ENCODE measurements at regions of chr18 and their contacts with region 1.

Region 1: DNA sequence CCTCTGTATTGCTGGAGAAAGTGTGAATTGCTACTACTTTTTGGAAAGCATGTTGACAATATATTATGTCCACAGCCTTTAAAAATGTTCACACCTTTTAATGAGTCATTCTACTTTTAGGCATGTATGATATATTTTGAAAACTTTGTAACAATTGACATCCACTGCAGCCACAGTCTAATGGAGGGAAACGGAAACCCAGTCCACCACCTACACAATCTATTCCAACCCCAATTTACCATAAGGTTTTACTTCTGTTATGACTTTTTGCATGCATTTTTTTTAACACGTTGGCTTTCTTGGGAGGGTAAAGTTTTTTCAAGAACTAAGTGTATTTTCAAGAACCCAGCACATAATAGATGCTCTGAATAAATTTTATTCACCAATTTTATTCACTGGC is 38.5 kb upstream of the ATP8B1 start:
- DNase-seq: peak; percentile 3
- H3K4me3 Mint-ChIP-seq: peak overlapping the region; percentile 24
- H3K27ac Mint-ChIP-seq: peak overlapping the region; percentile 55
- H3K4me1 Mint-ChIP-seq: peaks cover 30% of the 10 kb centered on the region
- H3K27me3 Mint-ChIP-seq: peaks cover 31% of the 10 kb centered on the region

Region 2: DNA sequence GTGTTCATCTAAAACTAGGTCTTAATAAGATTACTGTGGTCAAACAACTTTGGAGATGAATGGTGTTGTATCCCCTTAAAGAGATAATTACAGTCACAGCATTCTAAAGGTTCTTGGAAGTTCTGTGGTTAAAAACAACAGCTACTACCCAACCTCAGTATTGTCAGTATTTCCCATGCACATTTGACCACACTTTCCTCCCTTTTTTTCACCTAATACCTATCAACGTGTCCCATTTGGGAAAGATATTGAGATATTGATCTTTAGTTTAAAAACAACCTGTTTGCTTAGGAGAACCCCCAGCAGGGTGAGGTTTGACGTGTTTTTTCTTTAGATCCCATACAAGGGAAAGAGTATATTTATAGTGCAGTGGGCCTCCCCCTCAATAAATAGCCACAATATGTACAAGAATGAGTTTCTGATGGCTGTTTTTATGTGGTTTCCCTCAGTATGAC is 1124.8 kb before region 1 on chr18:
- intact Hi-C with region 1: loop called (anchors 1 kb)
- DNase-seq: no peak
- H3K4me3 Mint-ChIP-seq: no peak overlapping the region
- H3K27ac Mint-ChIP-seq: peak overlapping the region; percentile 66
- H3K4me1 Mint-ChIP-seq: peaks cover 35% of the 10 kb centered on the region
- H3K27me3 Mint-ChIP-seq: no peaks in the 10 kb centered on the region

Region 3: GRCh38 chr18:56727399-56727798 is 1114.2 kb before region 1 on chr18:
- intact Hi-C with region 1: no loop called
- DNase-seq: no peak
- H3K4me3 Mint-ChIP-seq: peak overlapping the region; percentile 4
- H3K27ac Mint-ChIP-seq: peak overlapping the region; percentile 35
- H3K4me1 Mint-ChIP-seq: peaks cover 12% of the 10 kb centered on the region
- H3K27me3 Mint-ChIP-seq: no peaks in the 10 kb centered on the region

Region 4: DNA sequence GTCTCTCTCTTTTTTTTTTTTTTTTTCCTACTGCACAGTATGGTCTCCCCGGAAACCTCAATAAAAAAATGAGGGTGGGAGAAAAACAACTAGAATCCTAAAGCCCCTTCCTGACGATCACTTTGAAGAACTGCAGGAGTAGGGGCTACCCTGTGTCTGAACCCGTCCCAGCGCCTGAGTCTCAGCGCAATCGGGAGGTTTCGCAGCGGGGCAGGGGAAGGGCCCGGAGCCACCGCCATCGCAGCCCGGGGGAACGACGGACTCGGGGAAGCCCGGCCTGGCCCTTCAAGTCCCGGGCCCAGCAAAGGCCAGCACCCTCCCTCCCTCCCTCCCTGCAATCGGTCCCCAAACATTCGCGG is 220.3 kb before region 1 on chr18:
- intact Hi-C with region 1: loop called (anchors 1 kb)
- DNase-seq: no peak
- H3K4me3 Mint-ChIP-seq: peak overlapping the region; percentile 85
- H3K27ac Mint-ChIP-seq: peak overlapping the region; percentile 87
- H3K4me1 Mint-ChIP-seq: peaks cover 9% of the 10 kb centered on the region
- H3K27me3 Mint-ChIP-seq: no peaks in the 10 kb centered on the region

Measured in activated T-helper 1 cell treated with anti-CD3 and anti-CD28 coated beads, Interleukin-12 subunit alpha, Interleukin-12 subunit beta, Interleukin-2, Interleukin-4 antibody, amounts not matched to agents 30 ng/mL and 10 ng/mL and 1 ng/mL, durations not matched to agents 14 hours and 24 hours and 36 hours (primary cell).